Activated CD4-positive, alpha-beta T cell treated with anti-CD3 and anti-CD28 coated beads for 36 hours (primary cell): ENCODE measurements at regions of chr2 and their contacts with region 1.

Region 1: DNA sequence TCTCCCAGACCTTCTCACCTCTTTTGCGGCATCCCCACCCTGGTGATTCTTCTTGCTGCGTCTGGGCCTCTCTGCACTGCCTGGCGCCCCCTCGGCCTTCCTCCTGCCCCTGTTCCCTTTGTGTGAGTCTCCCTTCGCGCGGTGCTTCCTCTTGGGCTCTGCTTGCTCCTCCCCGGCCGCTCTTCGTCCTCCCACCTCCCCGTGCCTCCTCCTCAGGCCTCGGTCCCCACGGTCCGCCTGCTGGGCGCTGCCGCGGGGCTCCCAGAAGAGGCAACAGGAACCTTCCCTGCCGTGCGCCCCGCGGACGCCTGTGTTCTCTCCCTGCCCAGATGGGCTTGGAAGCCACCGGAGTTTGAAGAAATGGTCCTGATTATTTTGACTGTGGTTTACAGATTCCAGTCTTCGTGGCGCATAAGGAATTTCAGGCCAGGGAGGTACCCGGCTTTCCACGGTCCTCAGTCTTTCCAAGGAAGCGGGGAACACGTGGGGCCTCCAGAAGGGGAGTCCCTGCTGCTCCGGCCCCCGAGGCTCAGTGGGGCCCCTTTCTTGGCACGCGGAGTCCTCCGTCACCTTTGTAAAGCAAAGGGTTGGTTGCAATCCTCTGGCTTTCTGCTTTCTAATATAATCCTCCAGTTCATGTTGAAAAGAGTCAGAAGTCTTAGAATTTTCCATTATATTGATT is 13.1 kb downstream of the RNU2-63P start:
- DNase-seq: no peak
- ATAC-seq: no peak
- H3K4me3 Mint-ChIP-seq: no peak overlapping the region
- H3K27ac Mint-ChIP-seq: no peak overlapping the region
- H3K4me1 Mint-ChIP-seq: peaks cover 9% of the 10 kb centered on the region
- H3K27me3 Mint-ChIP-seq: peaks cover 2% of the 10 kb centered on the region

Region 2: DNA sequence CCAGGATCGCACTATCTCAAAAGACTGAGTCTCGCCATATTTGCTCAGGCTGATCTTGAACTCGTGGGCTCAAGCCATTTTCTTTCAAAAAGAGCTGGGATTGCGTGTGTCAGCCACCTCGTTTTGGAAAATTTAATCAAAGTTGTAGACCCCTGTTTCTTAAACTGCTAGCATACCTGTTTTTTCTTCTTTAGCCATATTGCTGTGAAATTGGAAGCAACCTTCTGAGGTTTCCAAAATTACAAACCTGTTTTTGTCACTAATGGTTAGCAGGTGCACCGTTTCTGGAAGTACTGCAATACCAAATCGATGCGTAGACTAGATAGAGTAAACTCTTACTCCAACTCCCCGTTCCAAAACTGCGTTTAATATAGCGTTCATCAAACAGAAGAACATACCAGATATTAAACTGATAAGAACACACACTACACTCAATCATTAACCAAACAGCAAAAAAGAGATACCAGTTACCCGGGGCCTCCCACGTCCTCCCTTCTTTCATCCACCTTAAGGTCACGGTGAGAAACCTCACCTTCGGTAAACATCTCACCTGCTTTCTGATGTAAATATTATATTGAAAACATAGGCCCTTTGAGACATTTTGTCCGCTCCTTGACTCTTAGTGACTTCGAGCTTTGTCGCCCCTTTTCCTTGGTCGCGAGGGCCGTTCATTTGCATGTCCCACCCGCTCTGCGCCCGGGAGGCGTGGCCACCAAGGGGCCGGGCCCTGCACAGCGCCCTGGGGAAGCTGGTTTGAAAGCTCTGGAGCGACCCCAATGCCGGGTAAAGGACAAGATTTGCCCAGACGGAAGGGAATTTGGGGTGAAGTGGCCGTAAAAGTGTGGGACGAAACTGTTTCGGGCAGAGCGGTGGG is 13.1 kb after region 1 on chr2 and contains the start of gene RNU2-63P:
- CTCF ChIA-PET with region 1: interaction called, 5 read pairs
- POLR2A ChIA-PET with region 1: interaction called, 8 read pairs
- intact Hi-C with region 1: loop called in 1 of 2 experiments (anchors 1 kb)
- DNase-seq: peak; percentile 86
- ATAC-seq: peak; percentile 93
- H3K4me3 Mint-ChIP-seq: peak within 1 kb of the TSS; percentile 93
- H3K27ac Mint-ChIP-seq: peak within 1 kb of the TSS; percentile 99
- H3K4me1 Mint-ChIP-seq: peaks cover 16% of the 10 kb centered on the region
- H3K27me3 Mint-ChIP-seq: peaks cover 3% of the 10 kb centered on the region
- total RNA-seq, gene RNU2-63P: 1.7 to 8.5 TPM

Region 3: GRCh38 chr2:88038263-88039105 is 35.3 kb after region 1 on chr2:
- CTCF ChIA-PET with region 1: no interaction called
- POLR2A ChIA-PET with region 1: no interaction called
- intact Hi-C with region 1: loop called in 1 of 2 experiments (anchors 2 kb)
- DNase-seq: no peak
- ATAC-seq: peak; percentile 91
- H3K4me3 Mint-ChIP-seq: no peak overlapping the region
- H3K27ac Mint-ChIP-seq: peak overlapping the region; percentile 53
- H3K4me1 Mint-ChIP-seq: peaks cover 38% of the 10 kb centered on the region
- H3K27me3 Mint-ChIP-seq: no peaks in the 10 kb centered on the region

Region 4: GRCh38 chr2:88159955-88160415 is 156.8 kb after region 1 on chr2:
- CTCF ChIA-PET with region 1: interaction called, 4 read pairs
- POLR2A ChIA-PET with region 1: no interaction called
- intact Hi-C with region 1: loop called in 1 of 2 experiments (anchors 2 kb)
- DNase-seq: peak; percentile 67
- ATAC-seq: peak; percentile 58
- H3K4me3 Mint-ChIP-seq: no peak overlapping the region
- H3K27ac Mint-ChIP-seq: no peak overlapping the region
- H3K4me1 Mint-ChIP-seq: no peaks in the 10 kb centered on the region
- H3K27me3 Mint-ChIP-seq: peaks cover 3% of the 10 kb centered on the region

Region 5: DNA sequence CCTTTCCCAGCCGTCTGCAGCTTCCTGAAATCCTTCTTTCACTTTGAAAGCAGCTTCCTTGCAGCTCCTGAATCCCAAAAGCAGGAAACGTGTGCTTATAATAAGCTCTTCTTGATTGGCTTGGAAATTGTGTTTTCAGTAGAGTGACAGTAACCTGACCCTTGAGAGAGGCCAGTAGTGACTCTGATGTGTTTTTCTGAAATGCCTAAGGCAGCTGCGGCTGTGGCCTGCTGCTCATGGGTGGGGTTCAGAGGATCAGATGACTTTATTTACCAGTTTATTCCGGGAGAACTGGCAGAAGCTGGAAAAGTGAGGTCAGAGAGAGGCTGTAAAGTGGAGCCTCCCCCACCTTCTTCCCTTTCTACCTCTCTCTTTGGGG is 656.3 kb after region 1 on chr2:
- CTCF ChIA-PET with region 1: no interaction called
- POLR2A ChIA-PET with region 1: no interaction called
- intact Hi-C with region 1: no loop called
- DNase-seq: no peak
- ATAC-seq: no peak
- H3K4me3 Mint-ChIP-seq: no peak overlapping the region
- H3K27ac Mint-ChIP-seq: no peak overlapping the region
- H3K4me1 Mint-ChIP-seq: no peaks in the 10 kb centered on the region
- H3K27me3 Mint-ChIP-seq: no peaks in the 10 kb centered on the region